MCF 10A (cell line): ENCODE measurements at regions of chr13 and their contacts with region 1.

Region 1: DNA sequence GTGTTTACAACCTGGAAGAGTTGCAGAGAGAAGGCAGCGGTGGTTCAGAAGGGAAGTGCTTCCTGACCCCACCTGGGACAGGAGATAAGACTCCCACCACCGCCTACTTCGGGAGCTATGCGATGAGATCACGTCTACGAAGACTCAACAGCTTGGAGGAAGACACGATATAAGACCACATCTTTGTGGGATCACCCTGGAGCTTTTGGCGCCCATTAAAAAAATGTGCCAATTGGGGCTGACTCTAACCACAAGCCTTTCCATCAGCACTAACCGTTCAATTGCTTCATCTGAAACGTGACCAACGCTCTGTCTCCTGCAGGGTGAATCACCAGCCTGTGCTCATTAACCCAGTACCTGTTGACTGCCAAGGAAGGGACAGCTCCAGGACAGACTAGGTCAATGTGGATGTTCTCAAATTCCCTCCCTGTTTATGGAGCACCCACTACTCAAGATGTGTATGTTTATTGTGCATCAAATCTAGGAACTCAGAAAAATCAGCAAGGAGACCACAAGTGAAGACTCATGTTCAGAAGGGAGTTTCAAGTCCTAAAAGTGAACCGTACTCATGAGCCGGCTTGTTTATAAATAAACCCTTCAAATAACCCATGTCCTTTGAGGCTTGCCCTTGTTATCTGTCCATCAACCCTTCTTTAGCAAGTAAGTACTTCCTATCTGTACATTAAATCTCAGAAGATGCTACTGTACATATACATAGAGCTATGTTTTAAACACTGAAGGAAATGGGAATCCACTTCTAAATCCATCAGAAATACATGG is 67.5 kb downstream of the LATS2 start:
- DNase-seq: peak; percentile 92
- H3K4me3 Mint-ChIP-seq: no peak overlapping the region
- H3K27ac Mint-ChIP-seq: peak overlapping the region; percentile 56
- H3K4me1 Mint-ChIP-seq: peaks cover 31% of the 10 kb centered on the region
- H3K27me3 Mint-ChIP-seq: no peaks in the 10 kb centered on the region
- CTCF ChIP-seq: no peak

Region 2: GRCh38 chr13:21014502-21015170 is 20.8 kb after region 1 on chr13:
- CTCF ChIA-PET with region 1: interaction called, 6 read pairs
- POLR2A ChIA-PET with region 1: interaction called, 26 read pairs
- intact Hi-C with region 1: no loop called
- DNase-seq: peak; percentile 51
- H3K4me3 Mint-ChIP-seq: no peak overlapping the region
- H3K27ac Mint-ChIP-seq: peak overlapping the region; percentile 30
- H3K4me1 Mint-ChIP-seq: peaks cover 58% of the 10 kb centered on the region
- H3K27me3 Mint-ChIP-seq: no peaks in the 10 kb centered on the region
- CTCF ChIP-seq: no peak

Region 3: GRCh38 chr13:21060987-21061763 is 67.3 kb after region 1 on chr13 and contains the start of gene LATS2:
- CTCF ChIA-PET with region 1: interaction called, 4 read pairs
- POLR2A ChIA-PET with region 1: interaction called, 22 read pairs
- intact Hi-C with region 1: no loop called
- DNase-seq: peak; percentile 90
- H3K4me3 Mint-ChIP-seq: peak within 1 kb of the TSS; percentile 73
- H3K27ac Mint-ChIP-seq: peak within 1 kb of the TSS; percentile 86
- H3K4me1 Mint-ChIP-seq: peaks cover 18% of the 10 kb centered on the region
- H3K27me3 Mint-ChIP-seq: no peaks in the 10 kb centered on the region
- CTCF ChIP-seq: no peak
- total RNA-seq, gene LATS2: 28.7 and 32.3 TPM in 2 replicates

Region 4: GRCh38 chr13:21069561-21070004 is 75.7 kb after region 1 on chr13:
- CTCF ChIA-PET with region 1: interaction called, 3 read pairs
- POLR2A ChIA-PET with region 1: interaction called, 27 read pairs
- intact Hi-C with region 1: no loop called
- DNase-seq: peak; percentile 94
- H3K4me3 Mint-ChIP-seq: no peak overlapping the region
- H3K27ac Mint-ChIP-seq: peak overlapping the region; percentile 12
- H3K4me1 Mint-ChIP-seq: peaks cover 7% of the 10 kb centered on the region
- H3K27me3 Mint-ChIP-seq: no peaks in the 10 kb centered on the region
- CTCF ChIP-seq: no peak